ENCODE measurements at regions of chr6 and their contacts with region 1.

Region 1: GRCh38 chr6:897528-898207 is 204.7 kb upstream of the EXOC2 start:
- DNase-seq: no peak
- H3K4me3 ChIP-seq: no peak overlapping the region
- H3K27ac ChIP-seq: no peak overlapping the region
- H3K4me1 ChIP-seq: no peaks in the 10 kb centered on the region
- H3K27me3 ChIP-seq: peaks cover 6% of the 10 kb centered on the region
- CTCF ChIP-seq: no peak

Region 2: DNA sequence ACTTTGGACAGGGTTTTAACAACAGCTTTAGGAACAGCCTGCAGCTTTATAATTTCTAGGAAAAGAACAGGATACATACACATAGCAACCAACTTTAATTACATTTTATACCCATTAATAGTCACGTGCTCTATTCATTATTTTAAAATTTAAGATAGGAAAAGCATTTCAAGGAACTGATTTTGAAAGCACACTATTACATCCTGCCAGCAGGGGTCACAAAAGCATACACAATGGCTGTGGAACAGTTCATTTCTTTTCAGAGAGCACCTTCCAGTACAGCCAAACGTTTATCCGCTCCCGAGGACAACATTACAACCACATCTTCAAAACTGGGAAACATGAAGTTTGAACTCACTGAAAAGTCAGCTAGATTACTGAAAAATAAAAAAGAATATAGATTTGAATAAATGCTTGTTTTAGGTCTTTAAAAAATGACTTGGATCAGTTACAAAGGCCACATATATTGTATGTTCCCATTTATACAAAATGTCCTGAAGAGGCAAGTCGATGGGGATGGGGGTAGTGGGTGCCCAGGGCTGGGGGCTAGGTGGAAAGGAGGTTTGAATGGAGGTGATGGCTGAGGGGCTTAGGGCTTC is 100.1 kb before region 1 on chr6:
- dilution Hi-C with region 1: loop called (anchors 5 kb)
- DNase-seq: no peak
- H3K4me3 ChIP-seq: no peak overlapping the region
- H3K27ac ChIP-seq: no peak overlapping the region
- H3K4me1 ChIP-seq: no peaks in the 10 kb centered on the region
- H3K27me3 ChIP-seq: peaks cover 18% of the 10 kb centered on the region
- CTCF ChIP-seq: peak; percentile 56 to 66 (median 57)